ENCODE measurements at regions of chrX and their contacts with region 1.

Region 1: DNA sequence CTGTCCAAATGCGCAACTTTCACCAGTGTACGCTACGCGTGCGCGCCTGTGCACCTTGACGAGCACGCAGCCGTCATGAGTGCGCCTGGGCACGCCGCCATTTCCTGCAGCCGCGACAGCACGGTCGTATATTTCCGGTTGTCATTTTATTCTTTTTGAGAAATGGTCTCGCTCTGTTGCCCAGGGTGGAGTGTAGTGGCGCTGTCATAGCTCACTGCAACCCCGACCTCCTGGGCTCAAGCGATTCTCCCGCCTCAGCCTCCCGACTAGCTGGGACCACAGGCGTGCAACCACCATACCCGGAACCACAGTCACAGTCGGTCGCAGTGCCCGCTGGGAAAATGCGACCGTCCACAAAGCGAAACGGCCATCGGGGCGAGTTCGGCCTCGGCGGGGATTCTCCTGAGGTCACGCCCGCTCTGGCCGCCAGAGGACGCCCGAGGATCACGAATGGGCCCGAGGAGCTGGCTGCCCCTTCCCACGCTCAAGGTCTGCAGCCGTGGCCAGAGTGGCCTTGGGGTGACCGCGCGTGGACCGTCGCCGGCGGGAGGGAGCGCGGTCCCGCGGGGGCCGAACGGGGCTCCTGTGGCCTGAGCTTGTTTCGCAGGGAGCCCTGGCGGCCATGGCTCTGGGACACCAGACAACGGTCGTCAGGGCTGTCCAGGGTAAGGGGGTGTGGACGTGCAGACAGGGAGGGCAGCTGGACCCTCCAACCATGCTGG is 23.7 kb upstream of the PNMA3 start:
- DNase-seq: peak; percentile 50
- H3K4me3 ChIP-seq: peak overlapping the region; percentile 8
- H3K27ac ChIP-seq: no peak overlapping the region
- H3K4me1 ChIP-seq: peaks cover 3% of the 10 kb centered on the region
- CTCF ChIP-seq: peak; percentile 75

Region 2: DNA sequence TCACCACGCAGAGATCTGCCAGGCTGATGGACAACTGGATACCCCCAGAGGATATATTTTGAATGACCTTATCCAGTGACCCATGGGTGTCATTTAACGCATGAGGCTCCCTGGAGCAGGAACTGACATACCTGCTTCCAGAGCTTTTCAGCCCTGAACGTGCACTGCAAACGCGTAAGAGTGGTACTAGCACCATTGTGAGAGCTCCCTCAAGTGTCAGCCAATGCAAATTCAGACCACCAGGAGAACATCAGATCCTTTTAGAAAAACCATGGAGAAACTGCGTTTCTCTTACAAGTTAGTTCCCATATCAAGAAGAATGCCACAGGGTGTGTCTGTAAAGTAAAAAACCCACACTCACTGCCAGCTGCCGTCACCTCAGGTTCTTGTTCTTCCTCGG is 406.0 kb after region 1 on chrX:
- CTCF ChIA-PET with region 1: no interaction called
- POLR2A ChIA-PET with region 1: no interaction called
- intact Hi-C with region 1: loop called (anchors 1 kb)
- DNase-seq: peak; percentile 48
- H3K4me3 ChIP-seq: no peak overlapping the region
- H3K27ac ChIP-seq: no peak overlapping the region
- H3K4me1 ChIP-seq: no peaks in the 10 kb centered on the region
- CTCF ChIP-seq: peak; percentile 68